OCI-LY7 (cell line): ENCODE measurements at regions of chr5 and their contacts with region 1.

Region 1: GRCh38 chr5:177454397-177455035 is 7.9 kb downstream of the PRR7 start:
- DNase-seq: peak; percentile 91
- H3K4me3 ChIP-seq: peak overlapping the region; percentile 76
- H3K27ac ChIP-seq: peak overlapping the region; percentile 90
- H3K4me1 ChIP-seq: peaks cover 28% of the 10 kb centered on the region
- CTCF ChIP-seq: peak; percentile 84

Region 2: GRCh38 chr5:177311723-177312648 is 142.5 kb before region 1 on chr5 and contains the start of gene MXD3:
- CTCF ChIA-PET with region 1: no interaction called
- POLR2A ChIA-PET with region 1: interaction called, 4 read pairs
- intact Hi-C with region 1: loop called (anchors 1 kb)
- DNase-seq: peak; percentile 99
- H3K4me3 ChIP-seq: peak within 1 kb of the TSS; percentile 94
- H3K27ac ChIP-seq: peak within 1 kb of the TSS; percentile 92
- H3K4me1 ChIP-seq: peaks cover 51% of the 10 kb centered on the region
- CTCF ChIP-seq: no peak
- total RNA-seq, gene MXD3: 109 and 130 TPM in 2 replicates

Region 3: GRCh38 chr5:177317959-177318377 is 136.5 kb before region 1 on chr5:
- CTCF ChIA-PET with region 1: no interaction called
- POLR2A ChIA-PET with region 1: interaction called, 4 read pairs
- intact Hi-C with region 1: loop called (anchors 1 kb)
- DNase-seq: peak; percentile 82
- H3K4me3 ChIP-seq: no peak overlapping the region
- H3K27ac ChIP-seq: no peak overlapping the region
- H3K4me1 ChIP-seq: peaks cover 11% of the 10 kb centered on the region
- CTCF ChIP-seq: peak; percentile 99

Region 4: DNA sequence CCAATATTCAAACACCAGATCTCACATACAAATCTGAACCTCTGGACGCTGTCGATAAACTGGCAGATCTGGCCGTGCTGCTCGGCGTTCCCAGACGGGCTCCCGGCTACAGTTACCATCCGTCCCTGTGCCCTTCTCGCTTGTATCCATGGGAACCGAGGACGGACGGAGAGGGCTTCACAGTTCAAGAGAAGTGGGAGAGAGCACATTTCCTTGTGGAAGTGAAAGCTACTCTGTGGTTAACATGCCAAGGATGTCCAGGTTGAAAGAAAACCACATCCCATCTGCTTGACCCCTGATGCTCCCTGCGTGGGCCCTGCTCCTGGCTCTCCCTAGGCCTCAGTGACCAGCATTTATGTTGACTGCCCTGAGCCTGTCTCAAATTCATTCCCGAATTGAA is 25.3 kb after region 1 on chr5:
- CTCF ChIA-PET with region 1: no interaction called
- POLR2A ChIA-PET with region 1: no interaction called
- intact Hi-C with region 1: no loop called
- DNase-seq: no peak
- H3K4me3 ChIP-seq: no peak overlapping the region
- H3K27ac ChIP-seq: no peak overlapping the region
- H3K4me1 ChIP-seq: no peaks in the 10 kb centered on the region
- CTCF ChIP-seq: no peak

Region 5: GRCh38 chr5:177497292-177498033 is 42.9 kb after region 1 on chr5 and contains the start of gene PDLIM7:
- CTCF ChIA-PET with region 1: interaction called, 6 read pairs
- POLR2A ChIA-PET with region 1: interaction called, 6 read pairs
- intact Hi-C with region 1: loop called (anchors 2 kb)
- DNase-seq: peak; percentile 96
- H3K4me3 ChIP-seq: peak within 1 kb of the TSS; percentile 81
- H3K27ac ChIP-seq: peak within 1 kb of the TSS; percentile 29
- H3K4me1 ChIP-seq: peaks cover 60% of the 10 kb centered on the region
- CTCF ChIP-seq: no peak
- total RNA-seq, gene PDLIM7: 38.8 and 41.4 TPM in 2 replicates